GM13977 (cell line): ENCODE measurements at regions of chr17 and their contacts with region 1.

Region 1: GRCh38 chr17:74864866-74865395 is 5.2 kb upstream of the GRIN2C start:
- DNase-seq: peak; percentile 89
- CTCF ChIP-seq: peak; percentile 91

Region 2: GRCh38 chr17:74697515-74697914 is 167.4 kb before region 1 on chr17:
- in situ Hi-C with region 1: no loop called
- DNase-seq: peak; percentile 54
- CTCF ChIP-seq: no peak

Region 3: GRCh38 chr17:74748529-74749365 is 116.2 kb before region 1 on chr17 and contains the start of gene NHERF1:
- in situ Hi-C with region 1: loop called (anchors 10 kb)
- DNase-seq: peak; percentile 99
- CTCF ChIP-seq: peak; percentile 22